ENCODE measurements at regions of chr12 and their contacts with region 1.

Region 1: DNA sequence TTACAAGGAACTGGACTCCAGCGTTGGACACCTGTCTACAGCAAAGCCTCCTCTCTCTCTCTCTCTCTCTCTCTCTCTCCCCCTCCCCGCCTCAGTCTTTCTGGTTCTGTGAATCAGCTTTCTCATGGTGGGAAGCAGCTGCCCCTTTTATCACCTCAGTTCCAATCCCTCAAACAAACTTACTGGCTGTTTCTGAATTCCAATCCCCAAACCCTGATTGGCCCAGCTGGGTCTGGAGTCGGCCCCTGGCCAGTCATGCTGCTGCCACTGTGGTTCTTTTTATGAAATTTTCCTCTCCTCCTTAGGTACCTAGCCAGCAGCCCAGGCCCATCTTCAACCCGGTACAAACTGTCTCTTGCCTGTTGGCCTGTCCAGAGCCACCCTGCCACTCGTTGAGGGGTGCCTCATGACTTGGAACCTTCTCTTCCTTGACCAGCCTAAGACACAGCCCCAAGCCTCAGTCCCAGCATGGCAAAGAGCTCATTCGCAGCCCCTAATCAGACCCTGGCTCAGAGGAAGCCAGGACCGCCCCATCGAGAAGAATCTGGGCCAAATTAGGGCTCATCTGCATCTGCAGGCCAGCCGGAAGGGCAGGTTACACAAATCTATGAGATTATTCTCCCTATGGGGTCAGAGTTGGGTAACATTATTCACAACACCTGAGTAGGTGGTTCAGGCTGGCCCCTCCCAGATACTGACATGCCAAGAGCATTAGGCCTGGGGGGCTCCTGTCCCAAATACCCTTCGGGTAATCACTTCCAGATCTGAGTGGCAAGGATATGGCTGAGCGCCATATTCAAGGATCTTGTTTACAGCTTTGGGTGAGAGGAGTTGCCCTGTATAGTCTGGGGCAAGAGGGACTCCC is 9.5 kb upstream of the MORN3 start:
- DNase-seq: no peak
- H3K4me3 ChIP-seq: no peak overlapping the region
- H3K27ac ChIP-seq: no peak overlapping the region
- H3K4me1 ChIP-seq: no peaks in the 10 kb centered on the region
- H3K27me3 ChIP-seq: no peaks in the 10 kb centered on the region
- CTCF ChIP-seq: no peak
- POLR2A ChIP-seq: no peak

Region 2: DNA sequence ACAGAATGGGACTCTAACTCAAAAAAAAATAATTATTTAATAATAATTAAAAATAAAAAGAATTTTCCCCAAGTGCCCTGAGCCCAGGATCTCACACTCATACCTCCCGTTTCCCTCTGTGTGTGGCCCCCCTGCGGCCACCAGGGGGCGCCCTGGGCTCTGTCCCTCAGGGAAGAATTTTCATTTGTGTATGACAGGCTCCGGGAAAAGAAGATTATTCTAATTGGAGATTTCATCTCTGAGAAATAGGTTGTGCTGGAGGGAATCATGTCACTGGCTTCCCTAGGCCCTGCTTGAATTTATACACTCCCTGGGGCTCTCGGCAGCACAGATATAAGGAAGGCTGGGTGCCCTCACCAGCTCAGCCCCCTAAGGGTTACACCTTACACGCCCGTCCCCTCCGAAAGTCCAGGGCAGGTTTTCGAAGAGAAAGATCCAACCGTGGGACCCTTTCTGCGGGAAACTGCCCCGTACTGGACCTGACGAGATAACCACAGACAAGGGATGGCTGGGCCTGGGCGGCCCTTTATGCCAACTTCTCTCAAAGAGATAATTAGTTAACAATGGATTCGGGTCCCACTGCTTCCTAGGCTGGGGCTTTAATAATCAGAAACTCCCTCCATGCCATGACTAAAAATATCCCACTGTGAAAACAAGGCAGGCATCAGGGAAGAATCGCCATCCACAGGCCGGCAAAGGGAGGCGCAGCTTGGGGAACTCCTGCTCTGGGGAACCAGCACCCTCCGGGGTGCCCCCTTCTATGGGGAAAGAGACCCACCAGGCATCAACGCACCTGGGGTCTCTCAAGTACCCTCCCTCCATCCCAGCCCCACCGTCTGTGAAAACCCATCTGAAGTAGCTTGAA is 178.8 kb before region 1 on chr12:
- intact Hi-C with region 1: loop called (anchors 5 kb)
- DNase-seq: no peak
- H3K4me3 ChIP-seq: peak overlapping the region in 1 of 2 donors; percentile 20
- H3K27ac ChIP-seq: peak overlapping the region; percentile 28
- H3K4me1 ChIP-seq: peaks cover 7% of the 10 kb centered on the region
- H3K27me3 ChIP-seq: no peaks in the 10 kb centered on the region
- CTCF ChIP-seq: peak; percentile 81 to 87 (median 86)
- POLR2A ChIP-seq: no peak

Region 3: GRCh38 chr12:121550974-121551634 is 127.8 kb before region 1 on chr12:
- intact Hi-C with region 1: loop called (anchors 5 kb)
- DNase-seq: no peak
- H3K4me3 ChIP-seq: no peak overlapping the region
- H3K27ac ChIP-seq: no peak overlapping the region
- H3K4me1 ChIP-seq: no peaks in the 10 kb centered on the region
- H3K27me3 ChIP-seq: no peaks in the 10 kb centered on the region
- CTCF ChIP-seq: no peak
- POLR2A ChIP-seq: no peak

Measured in vagina (tissue), 2 donors.